ENCODE measurements at regions of chr5 and their contacts with region 1.

Region 1: DNA sequence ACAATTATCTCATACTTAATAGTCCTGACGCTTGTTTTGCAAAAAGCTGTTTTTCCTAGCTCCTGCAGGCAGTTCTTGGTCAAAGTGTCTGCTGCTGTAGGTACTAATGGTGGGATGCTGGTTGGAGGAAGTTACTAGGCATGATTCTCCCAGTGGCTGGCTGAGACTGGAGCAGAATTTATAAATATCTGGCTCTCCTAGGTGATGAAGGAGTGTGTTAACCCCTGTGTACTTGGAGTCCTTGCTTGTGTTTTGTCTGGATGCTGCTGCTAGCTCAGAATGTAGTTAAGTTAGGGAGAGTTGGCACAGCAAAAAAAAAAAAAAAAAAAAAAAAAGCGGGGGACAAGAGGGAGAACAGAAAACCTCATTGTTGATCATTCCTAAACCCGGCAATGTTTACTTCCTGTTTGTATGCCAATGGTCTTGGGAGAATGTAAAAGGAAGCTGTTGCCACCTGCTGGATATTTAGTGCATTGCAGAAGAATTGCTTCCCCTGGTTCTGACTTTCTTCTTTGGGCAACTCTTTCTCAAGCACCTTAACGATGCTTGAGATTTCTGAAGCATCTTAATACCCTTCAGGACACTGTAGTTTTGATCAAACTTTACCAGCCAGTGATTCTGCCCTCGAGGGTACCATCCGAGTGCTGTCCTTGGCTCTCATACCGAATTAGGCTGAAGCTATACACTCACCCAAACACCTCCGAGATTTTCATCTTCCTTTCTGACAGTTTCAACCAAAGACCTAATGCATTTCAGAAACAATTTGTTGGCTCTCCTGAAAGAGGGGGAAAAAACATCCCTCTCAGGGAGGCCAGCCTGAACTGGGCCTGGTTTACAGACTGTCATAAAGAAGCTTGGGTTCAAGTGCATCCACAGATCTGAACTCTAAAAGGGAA is 71.7 kb upstream of the WWC1 start:
- DNase-seq: peak; percentile 67
- H3K4me3 ChIP-seq: no peak overlapping the region
- CTCF ChIP-seq: peak; percentile 77

Region 2: DNA sequence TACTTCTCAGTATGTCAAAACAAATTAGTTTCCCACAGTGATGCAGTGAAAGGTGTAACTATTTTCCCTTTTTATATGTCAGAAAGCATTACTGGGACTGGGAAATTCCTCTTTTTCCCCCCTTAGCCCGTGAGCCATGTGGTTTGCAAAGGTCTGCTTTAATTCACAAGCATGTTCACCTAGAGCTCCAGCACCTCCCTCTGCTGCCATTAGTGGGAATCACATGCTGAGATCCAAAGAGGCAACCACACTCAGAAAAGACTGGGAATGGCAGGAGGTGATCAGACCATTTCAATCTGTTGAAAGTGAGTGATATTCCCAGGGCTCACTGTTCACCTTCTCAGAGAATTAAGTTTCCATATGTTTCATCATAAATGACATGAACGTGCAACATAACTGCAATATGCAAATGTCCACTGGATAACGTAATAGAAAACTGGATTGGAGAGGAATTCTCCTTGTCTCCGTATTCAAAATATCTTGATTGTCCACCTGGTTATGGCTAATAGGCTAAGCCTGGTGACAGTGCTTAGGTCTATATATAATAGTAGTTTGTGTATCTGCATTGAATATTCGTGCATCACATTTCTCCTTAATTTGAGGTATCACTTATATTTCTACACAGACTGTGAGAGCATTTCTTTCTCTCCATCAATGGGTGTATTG is 631.9 kb before region 1 on chr5:
- in situ Hi-C with region 1: loop called (anchors 25 kb)
- DNase-seq: peak; percentile 22
- H3K4me3 ChIP-seq: no peak overlapping the region
- CTCF ChIP-seq: peak; percentile 81

Measured in astrocyte of the cerebellum (primary cell).